Endothelial cell of umbilical vein (primary cell): ENCODE measurements at regions of chr2 and their contacts with region 1.

Region 1: DNA sequence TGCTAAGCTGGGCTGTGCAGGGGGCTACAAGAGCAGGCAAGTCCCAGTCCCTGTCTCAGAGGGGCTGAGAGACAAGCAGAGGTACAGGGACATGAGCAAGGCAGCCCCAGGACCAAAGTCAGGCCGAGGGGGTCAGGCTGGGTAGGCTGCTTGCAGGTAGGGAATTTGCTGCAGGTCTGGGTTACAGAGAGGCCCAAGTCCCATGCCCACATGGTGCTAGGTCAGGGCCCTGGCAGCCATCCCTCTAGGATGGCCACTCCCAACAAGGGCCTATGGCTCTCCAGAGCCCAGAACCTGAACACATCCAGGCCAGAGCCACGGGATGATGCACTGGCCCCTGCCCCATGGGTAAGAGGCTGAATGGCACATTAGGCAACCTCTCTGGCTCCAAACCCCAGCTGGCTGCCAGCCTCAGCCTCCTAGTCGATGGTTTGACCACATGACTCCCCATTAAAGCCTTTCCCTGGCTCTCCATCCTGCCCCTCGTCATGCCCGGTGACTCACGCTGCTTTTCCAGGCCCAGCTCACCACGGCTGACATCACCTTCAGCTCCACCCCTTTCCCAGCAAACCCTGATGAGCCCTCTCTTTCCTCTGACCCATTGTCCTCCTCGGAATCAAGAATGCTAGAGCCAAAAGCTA is 83.7 kb downstream of the SDC1 start:
- DNase-seq: peak; percentile 94
- H3K4me3 ChIP-seq: no peak overlapping the region
- H3K27ac ChIP-seq: peak overlapping the region; percentile 38
- H3K4me1 ChIP-seq: peaks cover 17% of the 10 kb centered on the region
- H3K27me3 ChIP-seq: no peaks in the 10 kb centered on the region
- CTCF ChIP-seq: no peak
- POLR2A ChIP-seq: no peak

Region 2: DNA sequence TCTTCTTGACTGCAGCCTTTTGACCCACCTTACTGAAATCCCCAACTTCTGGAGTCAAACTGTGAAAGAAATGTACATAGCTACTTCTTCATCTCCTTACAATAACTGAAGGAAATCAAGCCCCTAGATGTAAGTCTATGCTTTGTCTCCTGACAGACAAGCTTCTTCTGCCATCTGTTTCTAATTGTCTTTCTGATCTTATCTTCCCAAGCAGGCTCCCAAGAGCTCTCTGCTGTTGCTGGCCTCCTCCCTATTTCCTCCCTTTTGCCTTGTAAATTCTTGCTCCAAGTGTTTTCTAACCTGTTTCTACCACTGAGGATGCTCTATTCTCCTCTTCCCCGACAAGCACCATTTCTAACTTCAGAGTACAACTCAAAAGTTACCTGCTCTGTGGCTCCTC is 705.4 kb before region 1 on chr2:
- CTCF ChIA-PET with region 1: no interaction called
- POLR2A ChIA-PET with region 1: no interaction called
- dilution Hi-C with region 1: no loop called
- intact Hi-C with region 1: no loop called
- DNase-seq: no peak
- H3K4me3 ChIP-seq: no peak overlapping the region
- H3K27ac ChIP-seq: no peak overlapping the region
- H3K4me1 ChIP-seq: no peaks in the 10 kb centered on the region
- H3K27me3 ChIP-seq: no peaks in the 10 kb centered on the region
- CTCF ChIP-seq: no peak
- POLR2A ChIP-seq: no peak

Region 3: GRCh38 chr2:20165680-20166509 is 24.7 kb after region 1 on chr2:
- CTCF ChIA-PET with region 1: interaction called, 4 read pairs
- POLR2A ChIA-PET with region 1: no interaction called
- dilution Hi-C with region 1: no loop called
- intact Hi-C with region 1: loop called (anchors 2 kb)
- DNase-seq: no peak
- H3K4me3 ChIP-seq: no peak overlapping the region
- H3K27ac ChIP-seq: no peak overlapping the region
- H3K4me1 ChIP-seq: peaks cover 3% of the 10 kb centered on the region
- H3K27me3 ChIP-seq: no peaks in the 10 kb centered on the region
- CTCF ChIP-seq: no peak
- POLR2A ChIP-seq: no peak